ENCODE measurements at regions of chr3 and their contacts with region 1.

Region 1: GRCh38 chr3:146160964-146161662 is at the start of gene PLOD2:
- DNase-seq: peak; percentile 88
- ATAC-seq: peak; percentile 83
- total RNA-seq, gene PLOD2: 19.7 TPM

Region 2: DNA sequence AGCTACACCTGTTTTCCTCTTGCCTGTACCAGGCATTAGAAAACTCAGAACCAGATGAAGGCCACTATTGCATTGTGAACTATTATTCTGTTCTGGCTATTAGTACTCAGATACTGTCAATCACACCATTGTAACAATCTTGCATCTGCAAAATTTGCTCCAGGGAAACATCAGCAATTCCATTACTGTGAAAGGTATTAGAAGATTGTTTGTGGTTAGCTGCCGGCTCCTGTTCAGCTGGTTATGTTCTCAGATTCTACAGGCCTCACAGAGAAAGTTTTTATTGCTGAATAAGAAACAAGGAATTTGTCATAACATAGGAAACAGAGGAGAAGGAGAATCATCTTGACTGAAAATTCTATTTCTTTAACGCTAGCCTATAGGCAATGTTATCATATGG is 180.1 kb before region 1 on chr3:
- intact Hi-C with region 1: no loop called
- DNase-seq: no peak
- ATAC-seq: no peak

Region 3: DNA sequence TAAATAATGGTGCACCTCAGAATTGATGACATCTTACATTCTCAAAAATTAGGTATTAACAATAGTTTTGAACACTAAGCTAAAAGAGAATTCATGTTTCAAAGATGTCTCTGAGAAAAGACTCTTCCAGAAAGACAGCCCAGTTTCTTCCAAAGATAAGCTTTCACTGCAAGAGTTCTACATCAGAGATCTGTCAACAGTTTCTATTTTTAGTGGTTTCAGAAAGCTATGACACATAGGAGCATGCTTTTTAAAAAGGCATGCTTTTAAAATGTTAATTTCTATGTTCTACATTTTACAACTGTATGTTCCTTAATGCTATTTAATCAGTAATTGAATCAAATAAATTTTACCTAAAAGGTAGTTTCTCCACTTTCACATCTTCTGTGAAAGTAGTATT is 88.3 kb before region 1 on chr3:
- intact Hi-C with region 1: loop called (anchors 5 kb)
- DNase-seq: no peak
- ATAC-seq: no peak

Region 4: DNA sequence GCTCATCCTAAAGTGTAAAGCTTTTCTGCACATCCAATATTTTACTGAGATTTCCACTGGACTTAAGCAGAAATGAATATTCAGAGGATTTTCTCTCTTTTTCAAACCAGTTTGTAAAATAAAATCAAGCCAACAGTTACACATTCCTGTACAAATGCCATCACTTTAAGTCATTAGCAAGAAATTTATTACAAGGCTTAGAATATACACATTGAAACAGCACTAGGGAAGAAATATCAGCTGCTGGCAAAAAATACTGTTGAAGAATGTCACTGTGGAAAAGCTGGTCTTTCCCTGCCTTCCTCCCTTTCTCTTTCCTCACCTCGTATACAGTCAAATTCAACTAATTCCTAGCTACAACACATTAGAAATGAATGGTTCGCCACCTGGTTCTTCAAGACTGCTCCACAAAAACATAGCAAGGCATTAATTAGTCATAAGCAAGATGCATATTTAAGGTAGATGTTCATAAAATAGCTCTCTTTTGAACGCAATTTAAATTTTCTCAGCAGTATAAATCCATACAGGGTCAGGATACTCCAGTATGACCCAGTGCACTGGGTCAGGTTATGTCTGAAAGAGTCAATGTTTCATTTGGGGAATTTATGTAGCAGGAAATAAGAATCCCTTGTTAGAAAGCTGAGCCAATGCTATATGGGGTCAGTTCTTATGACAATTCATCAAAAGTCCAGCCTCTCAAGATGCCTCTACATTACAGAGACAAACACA is 21.4 kb before region 1 on chr3:
- intact Hi-C with region 1: loop called (anchors 2 kb)
- DNase-seq: no peak
- ATAC-seq: no peak